K562 (cell line): ENCODE measurements at regions of chr16 and their contacts with region 1.

Region 1: DNA sequence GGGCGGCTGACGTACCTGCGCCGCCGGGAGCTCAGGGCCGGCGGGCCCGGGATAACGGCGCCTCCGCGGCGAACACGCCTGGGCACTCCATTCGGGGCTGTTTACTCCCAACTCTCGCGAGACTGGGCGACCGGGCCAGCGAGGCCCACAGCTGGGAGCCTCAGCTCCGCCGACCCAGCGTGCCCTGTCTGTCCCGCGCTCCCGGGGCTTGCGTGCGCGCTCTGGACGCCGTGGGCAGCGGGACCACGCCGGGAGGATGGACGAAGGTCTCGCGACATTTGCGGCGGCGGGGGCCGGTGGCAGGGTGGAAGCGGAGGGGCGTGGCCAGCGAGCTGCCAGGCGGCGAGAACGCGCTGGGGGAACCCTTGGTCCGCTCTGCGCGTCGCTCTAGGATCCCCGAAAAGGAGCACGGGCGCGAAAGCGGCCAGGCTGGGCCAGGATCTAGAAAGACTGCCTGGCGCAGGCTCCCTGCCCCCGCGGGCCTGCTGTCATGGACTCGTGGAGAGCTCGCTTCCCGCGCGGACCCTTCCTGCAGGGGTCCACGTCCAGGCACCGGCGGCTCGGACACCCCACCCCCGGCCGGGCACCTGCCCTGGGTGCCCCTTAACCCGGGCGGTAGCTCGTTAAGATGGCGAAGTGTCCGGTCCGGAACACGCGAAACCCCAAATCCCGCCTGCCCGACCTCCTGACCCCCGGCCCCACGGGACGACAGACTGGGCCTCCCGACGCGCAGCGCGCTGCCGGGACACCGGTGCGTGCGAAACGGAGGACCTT is at the start of gene MBTPS1:
- DNase-seq: peak; percentile 97 to 99 (median 98)
- ATAC-seq: peak; percentile 92
- H3K4me3 ChIP-seq: peak within 1 kb of the TSS; percentile 74
- H3K27ac ChIP-seq: peak within 1 kb of the TSS; percentile 90
- H3K4me1 ChIP-seq: peaks cover 9 to 27% of the 10 kb centered on the region in 2 experiments; a peak in 3 of 5 replicates
- H3K27me3 ChIP-seq: no peaks in the 10 kb centered on the region
- CTCF ChIP-seq: peak in 2 of 3 experiments; percentile 33 to 36; a peak in 2 of 6 replicates
- EP300 ChIP-seq: no peak
- POLR2A ChIP-seq: peak; percentile 92
- RAD21 ChIP-seq: peak in 1 of 2 experiments; percentile 26; a peak in 2 of 4 replicates
- polyA plus RNA-seq, gene MBTPS1: 2.8 to 4.3 TPM

Region 2: GRCh38 chr16:84104228-84104627 is 12.7 kb before region 1 on chr16:
- CTCF ChIA-PET with region 1: no interaction called
- POLR2A ChIA-PET with region 1: interaction called, 32 read pairs
- in situ Hi-C with region 1: no loop called
- intact Hi-C with region 1: no loop called
- DNase-seq: no peak
- ATAC-seq: no peak
- H3K4me3 ChIP-seq: no peak overlapping the region
- H3K27ac ChIP-seq: no peak overlapping the region
- H3K4me1 ChIP-seq: no peaks in the 10 kb centered on the region
- H3K27me3 ChIP-seq: no peaks in the 10 kb centered on the region
- CTCF ChIP-seq: no peak
- EP300 ChIP-seq: no peak
- POLR2A ChIP-seq: no peak
- RAD21 ChIP-seq: no peak

Region 3: DNA sequence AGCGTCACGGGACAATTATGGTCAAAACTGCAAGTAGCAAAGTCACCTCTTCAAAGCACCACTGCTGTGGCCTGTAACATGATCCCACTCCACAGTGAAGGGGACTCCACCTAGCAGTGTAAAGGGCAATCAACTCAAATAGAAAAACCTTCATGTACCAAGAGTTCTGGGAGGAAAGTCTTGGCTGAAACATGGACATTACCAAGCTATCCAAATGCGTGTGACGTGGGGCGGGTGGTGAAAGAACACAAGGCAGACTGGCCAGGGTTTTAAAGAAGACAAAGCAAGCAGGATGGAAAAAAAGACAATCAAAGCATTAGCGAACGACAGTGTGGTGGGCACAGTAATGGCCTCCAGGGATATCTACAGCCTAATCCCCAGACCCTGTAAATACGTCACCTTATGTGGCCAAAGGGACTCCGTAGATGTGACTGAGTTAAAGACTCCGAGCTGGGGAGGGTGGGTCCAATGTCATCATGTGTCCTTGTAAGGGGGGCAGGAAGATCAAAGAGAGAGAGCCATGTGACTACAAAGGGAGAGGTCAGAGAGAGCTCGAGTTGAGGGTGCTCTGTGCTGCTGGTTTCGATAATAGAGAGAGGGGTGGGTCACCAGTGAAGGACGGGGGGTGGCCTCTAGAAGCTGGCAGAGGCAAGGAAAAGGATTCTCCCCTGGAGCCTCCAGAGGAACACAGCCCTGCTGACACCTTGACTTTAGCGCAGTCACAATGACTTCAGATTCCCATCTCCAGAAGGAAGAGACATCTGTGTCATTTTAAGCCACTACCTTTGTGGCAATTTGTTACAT is 22.1 kb after region 1 on chr16:
- CTCF ChIA-PET with region 1: no interaction called
- POLR2A ChIA-PET with region 1: interaction called, 145 read pairs
- in situ Hi-C with region 1: no loop called
- intact Hi-C with region 1: loop called (anchors 1 kb)
- DNase-seq: peak; percentile 63 to 92 (median 76)
- ATAC-seq: peak; percentile 87
- H3K4me3 ChIP-seq: peak overlapping the region; percentile 15; the same call in 1 of the 2 replicates
- H3K27ac ChIP-seq: peak overlapping the region; percentile 97
- H3K4me1 ChIP-seq: peaks cover 28 to 32% of the 10 kb centered on the region in 2 experiments
- H3K27me3 ChIP-seq: no peaks in the 10 kb centered on the region
- CTCF ChIP-seq: peak in 1 of 3 experiments; percentile 19; a peak in 1 of 6 replicates
- EP300 ChIP-seq: peak; percentile 88
- POLR2A ChIP-seq: peak; percentile 71
- RAD21 ChIP-seq: no peak; a peak in 1 of 4 replicates

Region 4: DNA sequence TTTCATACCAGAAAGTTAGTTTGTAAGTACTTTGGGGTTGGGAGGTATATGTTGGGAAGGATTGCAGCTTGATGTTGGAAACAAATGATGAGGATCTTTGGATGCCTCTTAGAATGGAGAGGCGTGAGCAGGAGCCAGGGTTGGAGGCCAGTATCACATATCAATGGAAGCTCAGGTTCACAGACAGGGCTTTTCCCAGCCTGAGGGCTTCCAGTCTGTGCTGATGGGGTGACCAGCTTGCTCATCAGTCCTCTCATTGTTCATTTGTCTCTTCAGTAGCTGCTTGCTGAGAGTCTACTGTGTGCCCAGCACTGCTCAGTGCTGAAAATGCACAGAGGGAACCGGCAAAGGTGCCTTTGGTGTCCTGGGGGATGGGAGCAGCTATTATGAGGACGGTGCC is 34.0 kb after region 1 on chr16:
- CTCF ChIA-PET with region 1: no interaction called
- POLR2A ChIA-PET with region 1: interaction called, 10 read pairs
- in situ Hi-C with region 1: no loop called
- intact Hi-C with region 1: no loop called
- DNase-seq: no peak
- ATAC-seq: no peak; the same call in 2 of the 3 replicates
- H3K4me3 ChIP-seq: no peak overlapping the region
- H3K27ac ChIP-seq: no peak overlapping the region
- H3K4me1 ChIP-seq: no peaks in the 10 kb centered on the region
- H3K27me3 ChIP-seq: peaks cover 11 to 42% of the 10 kb centered on the region in 2 experiments
- CTCF ChIP-seq: no peak
- EP300 ChIP-seq: no peak
- POLR2A ChIP-seq: no peak
- RAD21 ChIP-seq: no peak

Region 5: GRCh38 chr16:84186685-84187437 is 70.0 kb after region 1 on chr16 and contains the start of gene TAF1C:
- CTCF ChIA-PET with region 1: interaction called, 3 read pairs
- POLR2A ChIA-PET with region 1: interaction called, 9 read pairs
- in situ Hi-C with region 1: no loop called
- intact Hi-C with region 1: loop called (anchors 1 kb)
- DNase-seq: peak; percentile 98 to 99 (median 99)
- ATAC-seq: peak; percentile 95
- H3K4me3 ChIP-seq: peak within 1 kb of the TSS; percentile 94
- H3K27ac ChIP-seq: peak within 1 kb of the TSS; percentile 78
- H3K4me1 ChIP-seq: peaks cover 5 to 34% of the 10 kb centered on the region in 2 experiments; a peak in 4 of 5 replicates
- H3K27me3 ChIP-seq: peaks cover 2 to 10% of the 10 kb centered on the region in 2 experiments; a peak in 1 of 5 replicates
- CTCF ChIP-seq: peak; percentile 98 to 99 (median 99)
- EP300 ChIP-seq: peak; percentile 62
- POLR2A ChIP-seq: peak; percentile 87
- RAD21 ChIP-seq: peak; percentile 80 to 89
- polyA plus RNA-seq, gene TAF1C: 1.5 TPM